ENCODE measurements at regions of chr2 and their contacts with region 1.

Region 1: DNA sequence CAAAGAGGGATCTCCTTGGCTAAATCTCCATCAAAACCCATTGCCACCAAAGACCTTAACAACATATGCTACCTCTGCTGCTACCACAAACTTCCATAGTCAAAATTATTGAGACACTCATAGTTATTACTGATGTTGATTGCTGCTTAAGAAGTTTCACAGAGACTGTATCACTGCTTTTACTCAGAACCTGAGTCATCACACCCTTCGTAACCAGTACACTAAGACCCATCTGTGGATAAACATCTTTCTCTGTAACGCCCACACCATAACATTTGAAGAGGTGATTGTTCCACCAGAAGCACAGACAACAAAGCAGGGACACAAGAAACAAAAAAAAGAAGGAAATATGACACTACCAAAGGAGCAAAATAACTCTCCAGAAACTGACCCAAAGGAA is 1563.1 kb downstream of the LRP1B start:
- DNase-seq: no peak
- ATAC-seq: no peak
- H3K4me3 ChIP-seq: no peak overlapping the region
- H3K27ac ChIP-seq: no peak overlapping the region
- H3K4me1 ChIP-seq: no peaks in the 10 kb centered on the region
- H3K27me3 ChIP-seq: no peaks in the 10 kb centered on the region
- CTCF ChIP-seq: no peak
- EP300 ChIP-seq: no peak
- POLR2A ChIP-seq: no peak
- RAD21 ChIP-seq: no peak

Region 2: GRCh38 chr2:140489193-140489592 is 78.5 kb before region 1 on chr2:
- CTCF ChIA-PET with region 1: no interaction called
- POLR2A ChIA-PET with region 1: no interaction called
- RAD21 ChIA-PET with region 1: no interaction called
- SMC1A ChIA-PET with region 1: no interaction called
- in situ Hi-C with region 1: no loop called
- intact Hi-C with region 1: no loop called
- DNase-seq: no peak
- ATAC-seq: no peak
- H3K4me3 ChIP-seq: no peak overlapping the region
- H3K27ac ChIP-seq: no peak overlapping the region
- H3K4me1 ChIP-seq: no peaks in the 10 kb centered on the region
- H3K27me3 ChIP-seq: no peaks in the 10 kb centered on the region
- CTCF ChIP-seq: no peak
- EP300 ChIP-seq: no peak
- POLR2A ChIP-seq: no peak
- RAD21 ChIP-seq: no peak

Region 3: GRCh38 chr2:140502951-140503630 is 64.6 kb before region 1 on chr2:
- CTCF ChIA-PET with region 1: no interaction called
- POLR2A ChIA-PET with region 1: no interaction called
- RAD21 ChIA-PET with region 1: no interaction called
- SMC1A ChIA-PET with region 1: no interaction called
- in situ Hi-C with region 1: no loop called
- intact Hi-C with region 1: no loop called
- DNase-seq: no peak
- ATAC-seq: peak; percentile 71
- H3K4me3 ChIP-seq: no peak overlapping the region
- H3K27ac ChIP-seq: no peak overlapping the region
- H3K4me1 ChIP-seq: no peaks in the 10 kb centered on the region
- H3K27me3 ChIP-seq: no peaks in the 10 kb centered on the region
- CTCF ChIP-seq: no peak
- EP300 ChIP-seq: no peak
- POLR2A ChIP-seq: no peak
- RAD21 ChIP-seq: no peak

Region 4: GRCh38 chr2:140586379-140586778 is 18.6 kb after region 1 on chr2:
- CTCF ChIA-PET with region 1: interaction called, 10 read pairs
- POLR2A ChIA-PET with region 1: no interaction called
- RAD21 ChIA-PET with region 1: no interaction called
- SMC1A ChIA-PET with region 1: interaction called, 3 read pairs
- in situ Hi-C with region 1: no loop called
- intact Hi-C with region 1: no loop called
- DNase-seq: peak; percentile 7
- ATAC-seq: peak; percentile 100
- H3K4me3 ChIP-seq: no peak overlapping the region
- H3K27ac ChIP-seq: no peak overlapping the region
- H3K4me1 ChIP-seq: no peaks in the 10 kb centered on the region
- H3K27me3 ChIP-seq: no peaks in the 10 kb centered on the region
- CTCF ChIP-seq: peak; percentile 66 to 86 (median 69)
- EP300 ChIP-seq: no peak
- POLR2A ChIP-seq: no peak
- RAD21 ChIP-seq: peak; percentile 77